ENCODE measurements at regions of chr15 and their contacts with region 1.

Region 1: DNA sequence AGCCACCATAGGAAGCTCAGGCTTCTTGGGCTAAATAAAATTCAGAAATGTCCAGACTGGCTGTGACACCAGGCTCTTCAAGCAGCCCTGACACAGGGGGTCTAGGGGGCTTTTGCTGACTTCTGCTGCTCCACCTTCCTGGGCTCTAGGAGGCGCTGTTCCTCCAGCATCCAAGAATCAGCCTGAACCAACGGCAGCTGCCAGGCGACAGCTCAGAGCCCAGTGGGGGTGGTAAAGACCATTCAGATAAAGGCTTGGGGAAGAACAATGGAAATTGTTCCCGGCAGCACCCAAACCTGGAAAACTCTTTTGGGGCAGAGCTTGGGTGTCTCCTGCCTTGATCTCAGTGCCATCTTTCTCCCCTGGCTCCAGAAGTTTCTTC is 21.6 kb upstream of the PSTPIP1 start:
- DNase-seq: peak; percentile 82
- H3K4me3 Mint-ChIP-seq: no peak overlapping the region
- H3K27ac Mint-ChIP-seq: no peak overlapping the region
- H3K4me1 Mint-ChIP-seq: peaks cover 18% of the 10 kb centered on the region
- H3K27me3 Mint-ChIP-seq: no peaks in the 10 kb centered on the region

Region 2: GRCh38 chr15:76799760-76800159 is 173.6 kb before region 1 on chr15:
- CTCF ChIA-PET with region 1: no interaction called
- POLR2A ChIA-PET with region 1: no interaction called
- intact Hi-C with region 1: no loop called
- DNase-seq: no peak
- H3K4me3 Mint-ChIP-seq: no peak overlapping the region
- H3K27ac Mint-ChIP-seq: no peak overlapping the region
- H3K4me1 Mint-ChIP-seq: no peaks in the 10 kb centered on the region
- H3K27me3 Mint-ChIP-seq: no peaks in the 10 kb centered on the region

Region 3: DNA sequence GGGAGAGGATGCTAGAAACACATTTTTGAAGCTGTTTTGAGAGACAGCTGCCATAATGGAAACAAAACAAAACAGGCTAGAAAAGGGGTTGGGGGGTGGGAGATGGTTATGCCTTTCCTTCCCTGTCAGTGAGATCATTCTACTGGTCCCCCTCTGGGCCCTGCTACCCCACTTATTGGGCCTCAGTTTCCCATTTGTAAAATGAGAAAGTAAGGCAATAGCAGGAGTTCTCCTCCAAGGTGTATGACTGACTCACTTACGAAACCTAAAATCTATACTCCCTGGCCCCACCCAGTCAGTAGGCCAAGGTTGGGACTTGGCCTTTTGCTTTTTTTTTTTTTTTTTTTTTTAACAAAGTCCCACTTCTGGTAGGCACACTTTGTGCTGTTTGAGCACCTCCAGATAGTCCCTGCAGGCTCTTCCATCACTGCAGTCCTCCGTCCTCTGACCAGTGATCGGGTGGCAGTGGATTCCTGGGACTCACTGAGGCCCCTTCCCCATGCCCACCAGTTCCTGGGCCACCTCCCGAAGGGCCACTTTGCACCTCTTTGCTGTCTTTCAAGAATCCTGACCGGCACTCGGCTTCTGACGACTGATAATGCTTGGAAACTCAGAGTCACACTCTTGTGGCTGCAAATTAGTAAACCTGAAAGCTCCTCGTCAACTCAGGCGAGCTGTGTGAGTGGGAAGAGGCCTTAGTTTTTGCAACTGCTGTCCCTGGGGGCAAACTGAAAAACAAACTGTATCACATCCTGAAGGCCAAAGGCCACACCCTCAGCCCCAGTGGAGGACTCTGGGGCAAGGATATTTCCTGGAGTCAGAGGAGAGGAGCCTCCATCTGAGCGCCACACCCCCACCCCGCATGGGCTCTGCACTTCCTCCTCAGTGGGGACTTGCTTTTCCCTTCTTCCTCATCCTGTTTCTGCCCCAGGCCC is 14.8 kb after region 1 on chr15:
- CTCF ChIA-PET with region 1: interaction called, 30 read pairs
- POLR2A ChIA-PET with region 1: no interaction called
- intact Hi-C with region 1: loop called (anchors 2 kb)
- DNase-seq: peak; percentile 92
- H3K4me3 Mint-ChIP-seq: peak overlapping the region; percentile 67
- H3K27ac Mint-ChIP-seq: peak overlapping the region; percentile 100
- H3K4me1 Mint-ChIP-seq: peaks cover 49% of the 10 kb centered on the region
- H3K27me3 Mint-ChIP-seq: no peaks in the 10 kb centered on the region

Region 4: GRCh38 chr15:77002954-77003912 is 29.9 kb after region 1 on chr15:
- CTCF ChIA-PET with region 1: interaction called, 21 read pairs
- POLR2A ChIA-PET with region 1: no interaction called
- intact Hi-C with region 1: no loop called
- DNase-seq: peak; percentile 91
- H3K4me3 Mint-ChIP-seq: peak overlapping the region; percentile 45
- H3K27ac Mint-ChIP-seq: peak overlapping the region; percentile 85
- H3K4me1 Mint-ChIP-seq: peaks cover 91% of the 10 kb centered on the region
- H3K27me3 Mint-ChIP-seq: no peaks in the 10 kb centered on the region

Region 5: DNA sequence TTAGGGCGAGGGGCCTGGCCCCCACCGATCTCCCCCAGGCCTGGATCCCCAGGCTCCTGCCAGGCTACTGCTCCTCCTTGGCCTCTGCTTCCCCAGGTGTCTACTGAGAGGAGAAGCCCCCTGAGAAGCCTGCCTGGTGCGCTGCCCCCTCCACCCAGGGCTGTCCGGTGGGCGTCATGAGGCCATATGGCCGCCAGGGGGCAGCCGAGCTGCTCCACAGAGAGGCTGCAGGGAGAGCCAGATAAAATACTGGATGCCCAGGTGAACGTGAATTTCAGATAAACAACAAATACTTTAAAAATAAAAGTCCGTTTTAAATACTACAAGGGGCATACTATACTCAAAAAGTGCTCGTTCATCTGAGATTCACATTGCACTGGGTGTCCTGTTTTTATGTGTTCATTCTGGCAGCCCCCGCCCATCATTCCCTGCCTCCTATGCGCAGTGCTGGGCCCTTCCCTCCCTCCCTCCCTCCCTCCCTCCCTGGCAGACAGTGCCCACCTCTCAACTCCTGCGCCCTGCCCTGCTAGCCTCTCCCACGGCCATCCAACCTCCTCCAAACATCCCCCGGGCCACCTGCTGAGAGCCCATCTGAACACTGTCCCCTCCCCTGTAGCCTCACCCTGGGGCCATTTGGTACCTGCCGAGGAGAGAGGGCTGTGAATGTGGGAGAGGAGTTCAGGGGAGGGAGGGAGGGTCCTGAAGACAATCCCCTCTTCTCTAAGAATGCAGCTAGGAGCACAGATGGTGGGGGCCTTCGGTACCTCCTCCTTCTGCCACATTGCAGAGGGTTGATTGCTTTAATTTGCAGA is 51.1 kb after region 1 on chr15:
- CTCF ChIA-PET with region 1: interaction called, 77 read pairs
- POLR2A ChIA-PET with region 1: no interaction called
- intact Hi-C with region 1: loop called (anchors 1 kb)
- DNase-seq: peak; percentile 72
- H3K4me3 Mint-ChIP-seq: no peak overlapping the region
- H3K27ac Mint-ChIP-seq: peak overlapping the region; percentile 98
- H3K4me1 Mint-ChIP-seq: peaks cover 49% of the 10 kb centered on the region
- H3K27me3 Mint-ChIP-seq: no peaks in the 10 kb centered on the region

Region 6: DNA sequence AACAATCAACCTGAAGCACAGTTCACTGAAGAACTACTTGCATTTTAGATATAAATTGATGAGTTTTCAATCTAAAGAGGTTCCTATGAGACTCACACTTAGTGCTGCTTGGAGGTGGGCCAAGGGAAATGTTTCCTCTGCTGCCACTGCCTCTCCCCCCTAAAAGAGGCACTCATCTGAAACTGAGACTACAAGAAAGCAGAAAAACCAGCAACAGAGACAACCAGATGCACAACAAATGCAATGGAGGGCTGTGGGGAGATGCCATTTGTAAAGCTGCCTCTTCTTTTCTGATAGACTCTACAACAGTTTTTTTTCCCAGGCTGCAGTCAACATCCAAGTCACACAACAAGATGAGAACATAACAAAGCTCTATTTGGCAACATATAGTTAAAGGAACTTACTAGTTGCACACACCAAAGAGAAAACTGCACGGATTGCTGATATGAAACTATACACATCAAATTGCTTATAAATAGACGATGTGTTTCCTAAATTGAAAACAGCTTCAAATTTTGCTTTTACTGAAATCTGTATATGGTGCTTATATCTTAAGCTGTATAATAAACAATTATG is 86.5 kb after region 1 on chr15:
- CTCF ChIA-PET with region 1: interaction called, 12 read pairs
- POLR2A ChIA-PET with region 1: no interaction called
- intact Hi-C with region 1: no loop called
- DNase-seq: no peak
- H3K4me3 Mint-ChIP-seq: no peak overlapping the region
- H3K27ac Mint-ChIP-seq: no peak overlapping the region
- H3K4me1 Mint-ChIP-seq: peaks cover 40% of the 10 kb centered on the region
- H3K27me3 Mint-ChIP-seq: no peaks in the 10 kb centered on the region

Region 7: DNA sequence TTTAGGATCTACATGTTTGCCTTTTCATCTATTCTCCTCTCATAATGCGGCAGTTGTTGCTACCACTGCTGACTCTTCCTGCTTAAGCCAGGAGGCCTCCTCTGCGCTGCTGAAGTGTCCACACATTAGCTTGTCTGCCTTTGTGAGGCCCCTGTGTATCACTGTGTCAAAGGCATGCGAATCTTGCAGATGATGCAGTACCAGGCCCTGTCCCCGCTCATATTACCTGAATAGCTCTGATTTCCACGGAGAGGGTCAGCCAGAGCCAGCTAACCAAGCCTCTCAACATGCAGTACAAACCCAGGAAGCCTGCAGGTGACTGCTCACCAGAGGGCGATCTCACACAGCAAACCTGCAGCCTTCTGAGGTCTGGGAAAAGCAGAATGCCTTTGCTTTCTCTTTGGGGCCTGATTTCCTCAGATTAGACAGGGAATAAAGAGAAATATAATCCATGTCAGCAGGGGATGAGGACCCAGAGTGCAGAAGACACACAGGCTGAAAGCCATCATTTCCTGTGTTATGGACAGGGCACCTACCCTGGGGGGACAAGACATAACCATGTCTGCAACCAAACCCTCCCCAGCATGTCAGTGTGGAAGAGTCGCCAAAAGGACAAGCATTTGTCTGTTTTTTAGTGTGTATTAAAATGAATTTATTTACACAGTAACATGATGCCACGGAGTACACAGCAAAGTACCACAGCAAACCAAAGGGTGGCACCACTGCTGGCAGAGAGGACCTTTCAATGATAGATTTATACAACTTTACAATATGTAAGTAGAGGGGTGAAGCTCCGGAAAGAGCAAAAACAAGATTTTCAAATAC is 134.4 kb after region 1 on chr15:
- CTCF ChIA-PET with region 1: interaction called, 12 read pairs
- POLR2A ChIA-PET with region 1: no interaction called
- intact Hi-C with region 1: no loop called
- DNase-seq: peak; percentile 61
- H3K4me3 Mint-ChIP-seq: no peak overlapping the region
- H3K27ac Mint-ChIP-seq: no peak overlapping the region
- H3K4me1 Mint-ChIP-seq: no peaks in the 10 kb centered on the region
- H3K27me3 Mint-ChIP-seq: no peaks in the 10 kb centered on the region

Region 8: GRCh38 chr15:77496710-77497103 is 523.4 kb after region 1 on chr15:
- CTCF ChIA-PET with region 1: interaction called, 40 read pairs
- POLR2A ChIA-PET with region 1: no interaction called
- intact Hi-C with region 1: loop called (anchors 5 kb)
- DNase-seq: peak; percentile 81
- H3K4me3 Mint-ChIP-seq: no peak overlapping the region
- H3K27ac Mint-ChIP-seq: no peak overlapping the region
- H3K4me1 Mint-ChIP-seq: peaks cover 17% of the 10 kb centered on the region
- H3K27me3 Mint-ChIP-seq: no peaks in the 10 kb centered on the region